ENCODE measurements at regions of chr17 and their contacts with region 1.

Region 1: DNA sequence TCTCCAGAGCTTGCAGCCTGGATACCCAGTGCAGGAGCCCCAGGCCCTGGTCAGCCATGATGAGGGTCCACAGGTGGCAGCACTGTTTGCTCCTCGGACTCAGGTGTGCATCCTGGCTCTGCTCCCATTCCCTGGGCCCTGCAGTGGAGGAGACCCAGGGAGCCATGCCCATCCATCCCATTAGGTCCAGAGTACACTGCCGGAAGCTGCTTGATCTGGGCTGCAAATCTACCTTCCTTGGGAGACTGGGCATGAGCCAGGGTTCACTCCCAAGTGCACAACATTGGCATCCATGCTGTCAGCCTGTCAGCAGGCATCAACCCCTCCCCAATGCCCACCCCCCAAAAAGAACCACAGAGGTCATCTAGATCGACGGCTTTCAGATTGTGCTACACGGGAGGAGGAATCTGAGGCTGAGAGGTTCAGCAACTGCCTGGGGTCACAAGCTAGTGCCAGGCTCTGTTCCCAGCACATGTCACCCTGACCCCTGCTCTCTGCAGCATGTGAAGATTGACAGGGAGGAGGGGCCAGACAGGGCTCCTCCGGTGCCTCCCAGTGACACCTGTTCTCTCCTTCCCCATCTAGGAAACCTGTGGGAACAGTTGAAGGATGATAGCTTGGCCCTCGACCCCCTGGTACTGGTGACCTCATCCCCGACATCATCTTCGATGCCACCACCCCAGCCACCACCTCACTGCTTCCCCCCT is 15.7 kb downstream of the UNC119 start:
- DNase-seq: no peak
- ATAC-seq: no peak
- H3K4me3 ChIP-seq: no peak overlapping the region
- H3K27ac ChIP-seq: no peak overlapping the region
- H3K4me1 ChIP-seq: no peaks in the 10 kb centered on the region
- H3K27me3 ChIP-seq: no peaks in the 10 kb centered on the region
- CTCF ChIP-seq: no peak
- POLR2A ChIP-seq: no peak

Region 2: DNA sequence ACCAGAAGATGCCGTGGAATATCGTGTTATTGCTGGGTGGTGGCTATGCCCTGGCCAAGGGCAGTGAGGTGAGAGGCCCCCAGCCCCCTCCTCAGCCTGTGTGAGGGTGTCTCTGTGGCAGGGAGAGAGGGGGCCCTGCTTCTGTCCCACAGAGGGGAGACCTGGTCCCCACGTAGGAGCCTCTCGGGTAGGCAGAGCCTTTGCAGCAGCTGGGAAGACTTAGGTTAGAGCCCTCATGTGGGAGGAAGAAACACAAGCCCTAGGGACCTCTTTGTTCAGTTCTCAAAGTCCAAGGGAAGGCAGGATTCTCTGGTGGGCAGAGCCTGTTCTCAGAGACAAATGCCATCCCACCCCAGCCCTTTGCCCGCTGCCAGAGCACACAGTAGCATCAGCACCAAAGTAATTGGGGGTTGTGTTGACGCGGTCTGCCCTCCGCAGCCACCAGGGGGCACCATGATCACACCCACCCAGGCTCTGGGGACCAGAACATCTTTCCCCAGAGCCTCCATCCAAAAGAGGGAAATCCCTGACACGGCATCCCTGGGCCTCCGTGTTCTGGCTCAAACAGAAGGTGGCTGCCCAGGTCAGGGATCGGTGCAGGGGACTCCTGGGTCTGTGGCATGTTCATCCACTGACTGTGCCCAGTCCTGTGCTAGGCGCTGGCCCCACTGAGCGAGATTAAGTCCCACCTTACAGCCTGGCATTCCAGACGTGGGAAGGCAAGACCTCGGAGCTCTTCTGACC is 42.1 kb before region 1 on chr17:
- intact Hi-C with region 1: loop called in 1 of 2 experiments (anchors 5 kb)
- DNase-seq: peak; percentile 78 to 79 (median 78)
- ATAC-seq: peak; percentile 79 to 95 (median 90)
- H3K4me3 ChIP-seq: no peak overlapping the region
- H3K27ac ChIP-seq: no peak overlapping the region
- H3K4me1 ChIP-seq: no peaks in the 10 kb centered on the region
- H3K27me3 ChIP-seq: no peaks in the 10 kb centered on the region
- CTCF ChIP-seq: peak; percentile 84 to 89 (median 86)
- POLR2A ChIP-seq: no peak